ENCODE measurements at regions of chr4 and their contacts with region 1.

Region 1: DNA sequence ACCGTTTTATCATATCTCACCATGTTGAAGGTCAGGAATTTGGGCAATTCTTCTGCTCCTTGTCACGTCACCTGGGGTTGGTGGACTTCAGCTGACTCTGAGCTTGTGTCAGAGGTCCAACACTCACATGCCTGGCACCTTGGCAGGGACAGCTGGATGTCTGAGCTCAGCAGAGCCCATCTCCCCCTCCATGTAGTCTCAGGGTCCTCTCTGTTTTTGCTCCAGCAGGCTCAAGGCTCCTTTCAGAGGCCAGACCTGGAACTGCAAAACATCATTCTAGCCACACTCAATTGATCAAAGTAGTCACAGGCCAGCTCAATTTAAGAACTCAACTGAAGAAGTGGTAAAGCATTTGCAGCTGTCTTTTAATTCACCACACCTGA is 45.4 kb downstream of the EDNRA start:
- DNase-seq: no peak
- H3K4me3 ChIP-seq: no peak overlapping the region
- H3K27ac ChIP-seq: peak overlapping the region; percentile 26 to 43
- H3K4me1 ChIP-seq: no peaks in the 10 kb centered on the region
- H3K27me3 ChIP-seq: no peaks in the 10 kb centered on the region
- CTCF ChIP-seq: peak in 1 of 4 experiments; percentile 17
- POLR2A ChIP-seq: no peak

Region 2: GRCh38 chr4:147118528-147118927 is 407.7 kb before region 1 on chr4:
- intact Hi-C with region 1: loop called (anchors 5 kb)
- DNase-seq: peak; percentile 52
- H3K4me3 ChIP-seq: no peak overlapping the region
- H3K27ac ChIP-seq: peak overlapping the region; percentile 20 to 69
- H3K4me1 ChIP-seq: peaks cover 7% of the 10 kb centered on the region
- H3K27me3 ChIP-seq: no peaks in the 10 kb centered on the region
- CTCF ChIP-seq: no peak
- POLR2A ChIP-seq: no peak

Region 3: GRCh38 chr4:147220833-147221232 is 305.4 kb before region 1 on chr4:
- intact Hi-C with region 1: loop called (anchors 10 kb)
- DNase-seq: no peak
- H3K4me3 ChIP-seq: no peak overlapping the region
- H3K27ac ChIP-seq: no peak overlapping the region
- H3K4me1 ChIP-seq: no peaks in the 10 kb centered on the region
- H3K27me3 ChIP-seq: no peaks in the 10 kb centered on the region
- CTCF ChIP-seq: no peak
- POLR2A ChIP-seq: no peak

Region 4: GRCh38 chr4:147590249-147590920 is 64.1 kb after region 1 on chr4:
- intact Hi-C with region 1: loop called (anchors 5 kb)
- DNase-seq: peak; percentile 25
- H3K4me3 ChIP-seq: no peak overlapping the region
- H3K27ac ChIP-seq: no peak overlapping the region
- H3K4me1 ChIP-seq: no peaks in the 10 kb centered on the region
- H3K27me3 ChIP-seq: no peaks in the 10 kb centered on the region
- CTCF ChIP-seq: peak; percentile 47 to 75 (median 74)
- POLR2A ChIP-seq: no peak